CD8-positive, alpha-beta memory T cell (primary cell): ENCODE measurements at regions of chr6 and their contacts with region 1.

Region 1: GRCh38 chr6:152642989-152643388 is 5.8 kb upstream of the SYNE1 start:
- DNase-seq: peak in 4 of 5 donors; percentile 34 to 73 (median 42)
- H3K4me3 ChIP-seq: no peak overlapping the region
- H3K4me3 Mint-ChIP-seq: peak overlapping the region in 1 of 7 donors; percentile 3
- H3K27ac ChIP-seq: no peak overlapping the region
- H3K27ac Mint-ChIP-seq: peak overlapping the region in 1 of 8 donors; percentile 45
- H3K4me1 ChIP-seq: no peaks in the 10 kb centered on the region
- H3K4me1 Mint-ChIP-seq: peaks cover 14 to 27% (median 14%) of the 10 kb centered on the region in 3 donors
- H3K27me3 ChIP-seq: no peaks in the 10 kb centered on the region
- H3K27me3 Mint-ChIP-seq: peaks cover 2 to 3% of the 10 kb centered on the region in 2 donors

Region 2: GRCh38 chr6:152552616-152553209 is 90.3 kb before region 1 on chr6:
- CTCF ChIA-PET with region 1: interaction called, 30 read pairs
- POLR2A ChIA-PET with region 1: no interaction called
- DNase-seq: peak in 4 of 5 donors; percentile 26 to 66 (median 29)
- H3K4me3 ChIP-seq: no peak overlapping the region
- H3K4me3 Mint-ChIP-seq: no peak overlapping the region
- H3K27ac ChIP-seq: no peak overlapping the region
- H3K27ac Mint-ChIP-seq: peak overlapping the region in 1 of 8 donors; percentile 24
- H3K4me1 ChIP-seq: no peaks in the 10 kb centered on the region
- H3K4me1 Mint-ChIP-seq: peaks cover 0 to 8% (median 8%) of the 10 kb centered on the region in 3 donors
- H3K27me3 ChIP-seq: no peaks in the 10 kb centered on the region
- H3K27me3 Mint-ChIP-seq: no peaks in the 10 kb centered on the region

Region 3: GRCh38 chr6:152723398-152723797 is 80.4 kb after region 1 on chr6:
- CTCF ChIA-PET with region 1: no interaction called
- POLR2A ChIA-PET with region 1: no interaction called
- DNase-seq: no peak
- H3K4me3 ChIP-seq: no peak overlapping the region
- H3K4me3 Mint-ChIP-seq: no peak overlapping the region
- H3K27ac ChIP-seq: no peak overlapping the region
- H3K27ac Mint-ChIP-seq: no peak overlapping the region
- H3K4me1 ChIP-seq: no peaks in the 10 kb centered on the region
- H3K4me1 Mint-ChIP-seq: no peaks in the 10 kb centered on the region
- H3K27me3 ChIP-seq: no peaks in the 10 kb centered on the region
- H3K27me3 Mint-ChIP-seq: peaks cover 0 to 16% of the 10 kb centered on the region in 2 donors